ENCODE measurements at regions of chr5 and their contacts with region 1.

Region 1: GRCh38 chr5:173671121-173671949 is 54.9 kb upstream of the BOD1 start:
- DNase-seq: peak; percentile 60
- ATAC-seq: peak; percentile 80
- H3K4me3 ChIP-seq: no peak overlapping the region
- H3K27ac ChIP-seq: no peak overlapping the region
- H3K4me1 ChIP-seq: peaks cover 43% of the 10 kb centered on the region
- H3K27me3 ChIP-seq: no peaks in the 10 kb centered on the region
- CTCF ChIP-seq: no peak
- EP300 ChIP-seq: peak in 1 of 2 experiments; percentile 41; a peak in 2 of 4 replicates
- POLR2A ChIP-seq: no peak
- RAD21 ChIP-seq: no peak

Region 2: GRCh38 chr5:173355561-173355960 is 315.8 kb before region 1 on chr5:
- CTCF ChIA-PET with region 1: no interaction called
- POLR2A ChIA-PET with region 1: no interaction called
- in situ Hi-C with region 1: no loop called
- intact Hi-C with region 1: no loop called
- DNase-seq: no peak
- ATAC-seq: no peak
- H3K4me3 ChIP-seq: no peak overlapping the region
- H3K27ac ChIP-seq: no peak overlapping the region
- H3K4me1 ChIP-seq: no peaks in the 10 kb centered on the region
- H3K27me3 ChIP-seq: peaks cover 3 to 22% of the 10 kb centered on the region in 2 experiments; a peak in 3 of 5 replicates
- CTCF ChIP-seq: no peak
- EP300 ChIP-seq: no peak
- POLR2A ChIP-seq: no peak
- RAD21 ChIP-seq: no peak

Region 3: DNA sequence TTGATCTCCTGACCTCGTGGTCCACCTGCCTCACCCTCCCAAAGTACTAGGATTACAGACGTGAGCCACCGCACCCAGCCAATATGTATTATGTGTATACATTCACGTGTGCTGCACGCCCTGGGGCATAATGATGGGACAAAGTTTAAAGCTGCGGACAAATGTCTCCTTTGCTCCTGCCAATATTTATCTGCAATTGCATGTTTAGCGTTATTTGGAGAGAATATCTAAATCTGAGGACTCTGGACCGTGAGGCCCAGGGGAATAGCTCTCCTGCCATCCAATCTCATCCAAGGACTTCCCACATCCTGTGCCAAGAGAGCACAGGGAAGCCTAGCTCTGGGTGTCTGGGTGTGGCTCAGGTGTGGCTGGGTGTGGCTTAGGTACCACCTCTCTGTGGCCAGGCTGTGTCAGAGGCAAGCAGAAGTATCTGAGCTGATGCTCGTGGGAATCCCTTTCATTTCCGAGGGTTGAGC is 48.0 kb before region 1 on chr5:
- CTCF ChIA-PET with region 1: no interaction called
- POLR2A ChIA-PET with region 1: no interaction called
- in situ Hi-C with region 1: no loop called
- intact Hi-C with region 1: loop called (anchors 5 kb)
- DNase-seq: peak; percentile 67
- ATAC-seq: peak; percentile 77
- H3K4me3 ChIP-seq: no peak overlapping the region
- H3K27ac ChIP-seq: no peak overlapping the region
- H3K4me1 ChIP-seq: peaks cover 79% of the 10 kb centered on the region
- H3K27me3 ChIP-seq: peaks cover 0 to 1% of the 10 kb centered on the region in 2 experiments; a peak in 1 of 5 replicates
- CTCF ChIP-seq: no peak
- EP300 ChIP-seq: peak in 1 of 2 experiments; percentile 88; a peak in 2 of 4 replicates
- POLR2A ChIP-seq: no peak
- RAD21 ChIP-seq: no peak

Measured in HepG2 (cell line).